ENCODE measurements at regions of chr9 and their contacts with region 1.

Region 1: GRCh38 chr9:112074250-112075008 is 100.7 kb downstream of the SUSD1 start:
- DNase-seq: peak; percentile 83
- H3K4me3 ChIP-seq: no peak overlapping the region
- CTCF ChIP-seq: peak; percentile 95

Region 2: GRCh38 chr9:111759762-111760639 is 314.4 kb before region 1 on chr9:
- in situ Hi-C with region 1: loop called (anchors 5 kb)
- DNase-seq: peak; percentile 83
- H3K4me3 ChIP-seq: no peak overlapping the region
- CTCF ChIP-seq: peak; percentile 53

Region 3: GRCh38 chr9:111926421-111926875 is 148.0 kb before region 1 on chr9:
- in situ Hi-C with region 1: no loop called
- DNase-seq: no peak
- H3K4me3 ChIP-seq: no peak overlapping the region
- CTCF ChIP-seq: no peak

Region 4: DNA sequence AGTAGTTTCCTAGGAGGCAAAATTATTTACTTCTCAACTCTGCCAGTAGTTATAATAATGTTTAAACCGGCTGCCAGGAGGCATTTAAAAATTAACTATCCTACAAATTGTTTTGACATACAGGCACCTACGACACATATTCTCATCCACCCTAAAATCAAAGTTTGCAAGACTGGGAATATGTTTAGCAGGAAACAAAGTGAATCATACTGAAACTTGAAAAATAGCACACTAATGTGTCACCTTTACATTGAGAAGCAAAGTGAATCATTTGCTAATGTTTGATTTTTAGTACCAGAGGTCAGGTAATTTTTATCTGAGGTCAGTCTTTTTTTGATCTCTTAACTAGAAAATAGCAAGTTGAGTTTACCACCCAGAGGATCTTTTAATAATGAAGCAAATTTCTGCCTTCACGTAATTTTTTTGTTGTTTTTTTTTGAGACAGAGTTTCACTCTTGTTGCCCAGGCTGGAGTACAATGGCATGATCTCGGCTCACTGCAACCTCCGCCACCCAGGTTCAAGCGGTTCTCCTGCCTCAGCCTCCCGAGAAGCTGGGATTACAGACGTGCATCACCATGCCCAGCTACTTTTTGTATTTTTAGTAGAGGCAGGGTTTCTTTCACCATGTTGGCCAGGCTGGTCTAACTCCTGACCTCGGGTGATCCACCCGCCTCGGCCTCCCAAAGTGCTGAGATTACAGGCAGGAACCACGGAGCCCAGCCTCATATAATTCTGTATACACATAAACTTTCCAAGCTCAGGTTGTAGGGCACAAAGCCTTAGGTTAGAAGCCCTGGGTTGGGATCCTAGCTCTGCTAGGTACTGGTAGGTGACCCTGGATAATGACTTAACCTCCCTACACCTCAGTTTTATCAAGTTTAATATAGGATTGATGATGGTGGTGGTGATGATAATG is 53.5 kb before region 1 on chr9:
- in situ Hi-C with region 1: loop called (anchors 5 kb)
- DNase-seq: no peak
- H3K4me3 ChIP-seq: no peak overlapping the region
- CTCF ChIP-seq: no peak